Activated CD8-positive, alpha-beta T cell treated with anti-CD3 and anti-CD28 coated beads, Interleukin-2, amount 10 ng/mL, durations not matched to agents 7 days and 5 days (primary cell): ENCODE measurements at regions of chr12 and their contacts with region 1.

Region 1: GRCh38 chr12:57621497-57622292 is 10.5 kb downstream of the ARHGEF25 start:
- DNase-seq: peak; percentile 64
- ATAC-seq: peak; percentile 77
- H3K4me3 Mint-ChIP-seq: peak overlapping the region; percentile 63
- H3K27ac Mint-ChIP-seq: no peak overlapping the region
- H3K4me1 Mint-ChIP-seq: peaks cover 30% of the 10 kb centered on the region
- H3K27me3 Mint-ChIP-seq: peaks cover 94% of the 10 kb centered on the region

Region 2: GRCh38 chr12:57590536-57591479 is 30.9 kb before region 1 on chr12 and contains the start of gene PIP4K2C:
- CTCF ChIA-PET with region 1: interaction called, 87 read pairs
- POLR2A ChIA-PET with region 1: interaction called, 12 read pairs
- DNase-seq: peak; percentile 85
- ATAC-seq: peak; percentile 96
- H3K4me3 Mint-ChIP-seq: peak within 1 kb of the TSS; percentile 85
- H3K27ac Mint-ChIP-seq: peak within 1 kb of the TSS; percentile 84
- H3K4me1 Mint-ChIP-seq: peaks cover 28% of the 10 kb centered on the region
- H3K27me3 Mint-ChIP-seq: no peaks in the 10 kb centered on the region
- total RNA-seq, gene PIP4K2C: 16.8 to 17.9 TPM

Region 3: GRCh38 chr12:57604454-57604991 is 17.2 kb before region 1 on chr12 and contains the start of gene DTX3:
- CTCF ChIA-PET with region 1: interaction called, 13 read pairs
- POLR2A ChIA-PET with region 1: interaction called, 3 read pairs
- DNase-seq: peak; percentile 58
- ATAC-seq: peak; percentile 65
- H3K4me3 Mint-ChIP-seq: peak within 1 kb of the TSS; percentile 76
- H3K27ac Mint-ChIP-seq: peak within 1 kb of the TSS; percentile 86
- H3K4me1 Mint-ChIP-seq: peaks cover 24% of the 10 kb centered on the region
- H3K27me3 Mint-ChIP-seq: no peaks in the 10 kb centered on the region
- total RNA-seq, gene DTX3: 15.4 to 17.8 TPM

Region 4: GRCh38 chr12:57655541-57656240 is 34.0 kb after region 1 on chr12:
- CTCF ChIA-PET with region 1: no interaction called
- POLR2A ChIA-PET with region 1: no interaction called
- DNase-seq: no peak
- ATAC-seq: no peak
- H3K4me3 Mint-ChIP-seq: no peak overlapping the region
- H3K27ac Mint-ChIP-seq: no peak overlapping the region
- H3K4me1 Mint-ChIP-seq: no peaks in the 10 kb centered on the region
- H3K27me3 Mint-ChIP-seq: peaks cover 6% of the 10 kb centered on the region

Region 5: DNA sequence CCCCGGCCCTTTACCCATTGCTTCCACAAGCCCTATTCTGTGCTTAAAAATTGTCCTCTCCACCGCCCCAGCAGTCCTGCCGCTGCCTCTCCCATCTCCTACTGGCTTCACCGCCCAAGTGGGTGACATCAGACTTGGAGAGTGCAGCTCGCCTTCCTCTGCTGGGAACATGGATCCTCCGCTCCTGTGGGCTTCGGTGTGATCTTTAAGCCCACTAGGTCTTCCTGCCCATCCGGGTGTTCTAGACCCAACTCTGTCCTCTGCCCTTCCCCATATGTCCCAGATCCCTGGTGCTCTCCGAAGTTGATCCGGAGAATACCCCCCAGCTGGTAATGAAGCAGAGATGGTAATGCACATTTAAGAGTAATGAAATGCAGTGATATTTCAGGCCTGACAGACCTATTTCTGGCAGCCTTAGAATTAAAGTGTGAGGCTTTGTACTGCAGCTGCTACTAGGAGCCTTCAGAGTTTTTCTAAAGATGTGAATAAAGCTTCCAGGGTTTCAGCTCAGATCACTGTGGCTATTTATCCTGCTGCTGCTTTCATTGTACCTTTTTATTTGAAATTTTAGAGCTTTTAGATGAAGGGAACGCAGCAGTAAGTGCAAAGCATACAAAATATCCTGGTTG is 247.7 kb after region 1 on chr12:
- CTCF ChIA-PET with region 1: no interaction called
- POLR2A ChIA-PET with region 1: no interaction called
- DNase-seq: no peak
- ATAC-seq: no peak
- H3K4me3 Mint-ChIP-seq: no peak overlapping the region
- H3K27ac Mint-ChIP-seq: no peak overlapping the region
- H3K4me1 Mint-ChIP-seq: peaks cover 8% of the 10 kb centered on the region
- H3K27me3 Mint-ChIP-seq: peaks cover 8% of the 10 kb centered on the region